ENCODE measurements at regions of chr14 and their contacts with region 1.

Region 1: DNA sequence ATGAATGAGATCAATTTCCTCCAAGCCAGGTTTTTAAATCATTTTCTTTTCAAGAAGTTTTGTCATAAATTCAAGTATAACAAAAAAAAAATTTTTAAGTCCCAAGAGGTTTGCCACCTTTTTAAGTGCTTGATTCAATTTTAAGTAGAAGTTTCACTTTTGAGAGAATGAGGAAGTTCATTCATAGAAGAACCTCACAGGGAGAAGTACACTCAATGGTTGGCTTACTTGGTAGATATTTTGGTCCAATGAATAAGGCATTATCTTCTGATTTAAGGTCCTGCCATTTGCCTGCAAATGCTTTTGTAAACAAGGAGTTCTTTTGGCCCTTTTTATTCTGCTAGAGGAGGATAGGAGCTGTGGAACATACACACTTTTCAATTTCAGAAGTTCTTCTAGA is 96.7 kb upstream of the NOVA1 start:
- DNase-seq: no peak
- H3K4me3 ChIP-seq: no peak overlapping the region
- H3K27ac ChIP-seq: no peak overlapping the region
- H3K4me1 ChIP-seq: no peaks in the 10 kb centered on the region
- H3K27me3 ChIP-seq: no peaks in the 10 kb centered on the region
- CTCF ChIP-seq: no peak

Region 2: DNA sequence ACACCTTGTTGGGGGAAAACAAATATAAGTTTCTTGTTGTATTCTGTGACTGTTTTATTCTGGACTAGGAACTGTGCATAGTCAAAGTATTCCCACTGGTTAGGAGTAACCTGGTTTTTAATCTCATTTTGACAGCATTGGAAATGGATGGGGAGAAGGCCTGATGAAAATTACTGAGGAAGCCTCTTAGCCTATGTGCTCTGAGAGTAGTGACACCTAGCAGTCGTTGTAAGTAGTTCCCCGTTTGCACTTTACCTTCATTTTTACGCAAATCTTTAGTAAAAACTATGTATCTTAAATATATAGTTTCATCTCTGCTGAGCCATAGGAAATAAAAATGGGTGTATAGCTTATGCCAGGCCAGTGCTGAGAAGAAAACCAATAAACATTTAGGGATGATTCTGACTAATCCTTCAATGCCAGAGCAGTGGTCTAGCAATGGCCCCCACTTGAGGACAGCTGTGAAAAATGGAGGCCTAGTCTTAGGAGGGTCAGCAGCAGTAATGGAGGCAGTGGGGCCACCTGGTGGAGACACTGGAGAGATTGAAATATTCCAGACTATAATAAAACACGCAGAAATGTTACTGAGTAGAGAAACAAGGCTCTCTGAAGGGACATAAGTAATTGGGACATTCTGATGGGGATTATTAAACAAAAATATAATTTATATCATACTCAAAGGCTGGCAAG is 36.6 kb after region 1 on chr14:
- CTCF ChIA-PET with region 1: no interaction called
- POLR2A ChIA-PET with region 1: interaction called, 21 read pairs
- intact Hi-C with region 1: no loop called
- DNase-seq: peak in 1 of 2 experiments; percentile 1
- H3K4me3 ChIP-seq: no peak overlapping the region
- H3K27ac ChIP-seq: no peak overlapping the region
- H3K4me1 ChIP-seq: no peaks in the 10 kb centered on the region
- H3K27me3 ChIP-seq: no peaks in the 10 kb centered on the region
- CTCF ChIP-seq: no peak; the same call in 1 of the 2 replicates

Measured in PC-9 (cell line).